ENCODE measurements at regions of chr9 and their contacts with region 1.

Region 1: GRCh38 chr9:119556129-119556875 is 187.1 kb upstream of the BRINP1 start:
- DNase-seq: peak; percentile 71
- CTCF ChIP-seq: peak; percentile 97

Region 2: GRCh38 chr9:119544492-119545249 is 11.6 kb before region 1 on chr9:
- CTCF ChIA-PET with region 1: interaction called, 17 read pairs
- POLR2A ChIA-PET with region 1: no interaction called
- DNase-seq: no peak
- CTCF ChIP-seq: no peak

Region 3: DNA sequence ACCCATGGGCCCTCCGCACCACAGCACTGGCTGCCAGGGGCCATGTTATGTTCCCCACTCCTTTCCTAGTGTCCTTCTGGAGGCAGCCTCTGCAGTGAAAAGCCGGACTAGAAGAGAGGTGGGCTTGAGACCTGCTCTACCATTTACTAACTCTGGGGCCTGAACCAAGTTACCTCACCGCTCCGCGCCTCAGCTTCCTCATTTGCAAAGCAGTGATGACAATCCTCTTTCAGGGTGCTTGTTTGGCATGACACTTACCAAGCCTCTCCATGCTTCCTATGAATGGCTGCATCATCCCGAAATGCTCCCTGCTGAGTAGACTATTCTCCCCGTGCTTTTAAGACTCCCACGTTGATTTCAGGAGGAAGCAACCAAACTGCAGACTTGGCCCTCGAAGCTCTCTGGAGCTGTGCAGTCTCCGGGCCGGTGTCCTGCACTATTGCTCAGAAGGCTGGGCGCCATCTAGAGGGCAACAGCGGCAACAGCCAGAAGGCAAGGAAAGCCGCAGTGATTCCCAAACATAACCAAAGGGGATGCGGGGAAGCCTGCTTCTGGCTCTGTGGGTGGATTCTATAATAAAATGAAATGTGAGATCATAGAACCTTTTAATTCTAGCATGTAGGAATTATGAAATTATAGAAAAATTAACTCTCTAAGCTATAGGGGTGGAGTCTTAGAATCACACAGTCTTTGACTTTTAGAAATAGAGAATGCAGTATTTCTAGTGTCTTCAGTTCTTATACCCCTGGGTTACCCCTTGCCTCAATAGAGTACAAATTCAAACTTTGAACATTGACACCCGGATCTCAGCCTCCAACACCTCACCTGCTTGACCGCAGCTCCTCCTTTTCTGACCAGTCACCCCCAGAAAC is 412.8 kb after region 1 on chr9:
- CTCF ChIA-PET with region 1: interaction called, 32 read pairs
- POLR2A ChIA-PET with region 1: no interaction called
- DNase-seq: peak; percentile 75
- CTCF ChIP-seq: peak; percentile 97

Region 4: DNA sequence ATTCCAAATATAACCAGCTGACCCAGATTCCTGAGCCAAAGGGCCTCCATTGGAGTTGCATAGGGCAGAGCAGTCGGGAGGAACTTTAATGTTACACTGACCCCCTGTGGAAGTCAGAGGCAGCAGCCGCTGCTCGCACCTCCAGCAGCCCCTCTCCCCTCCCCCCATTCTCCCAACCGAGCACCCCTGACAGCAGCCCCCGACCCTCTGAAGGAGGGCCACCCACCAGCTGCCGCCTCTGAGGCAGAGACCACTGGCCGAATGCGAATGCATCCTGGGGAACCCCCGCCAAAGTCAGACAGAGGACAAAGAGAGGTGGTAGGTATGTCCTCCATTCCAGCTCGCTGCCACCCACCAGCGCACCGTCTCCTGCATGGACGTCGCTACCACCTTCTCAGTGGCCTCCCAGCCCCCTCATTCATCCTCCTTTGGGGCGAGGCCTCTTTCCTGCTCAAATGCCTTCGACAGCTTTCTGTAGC is 792.7 kb after region 1 on chr9:
- CTCF ChIA-PET with region 1: interaction called, 10 read pairs
- POLR2A ChIA-PET with region 1: no interaction called
- DNase-seq: peak; percentile 65
- CTCF ChIP-seq: peak; percentile 47

Region 5: GRCh38 chr9:120477521-120478001 is 921.3 kb after region 1 on chr9:
- CTCF ChIA-PET with region 1: interaction called, 17 read pairs
- POLR2A ChIA-PET with region 1: no interaction called
- DNase-seq: peak; percentile 39
- CTCF ChIP-seq: peak; percentile 75